ENCODE measurements at regions of chr17 and their contacts with region 1.

Region 1: DNA sequence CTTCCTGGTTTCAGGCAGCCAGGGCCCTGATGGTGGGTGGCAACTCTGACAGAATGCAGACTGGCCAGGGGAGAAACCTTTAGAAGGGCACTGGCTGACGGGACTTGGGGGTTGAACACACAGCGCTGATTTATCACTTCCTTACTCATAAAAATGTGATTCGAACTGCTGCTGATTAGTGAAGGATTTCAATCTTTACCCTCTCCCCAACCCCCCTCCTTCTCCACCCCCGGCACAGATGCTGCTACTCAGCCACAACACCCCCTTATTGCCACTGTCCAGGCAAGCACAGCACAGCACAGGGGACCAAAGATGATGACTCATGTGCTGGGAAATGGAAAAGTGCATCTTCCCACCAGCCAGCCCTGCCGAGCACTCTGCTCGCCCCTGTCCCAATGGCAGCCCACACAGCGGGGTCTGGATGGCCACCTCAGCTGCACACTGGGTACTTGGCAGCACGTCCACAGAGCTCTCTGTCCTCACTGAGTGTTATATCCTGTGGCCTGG is 70.1 kb downstream of the SMG6 start:
- DNase-seq: no peak
- ATAC-seq: no peak
- H3K4me3 Mint-ChIP-seq: no peak overlapping the region
- H3K27ac Mint-ChIP-seq: no peak overlapping the region
- H3K4me1 Mint-ChIP-seq: no peaks in the 10 kb centered on the region
- H3K27me3 Mint-ChIP-seq: no peaks in the 10 kb centered on the region
- CTCF ChIP-seq: no peak

Region 2: GRCh38 chr17:2195729-2196128 is 37.8 kb before region 1 on chr17:
- CTCF ChIA-PET with region 1: no interaction called
- POLR2A ChIA-PET with region 1: no interaction called
- DNase-seq: no peak
- ATAC-seq: no peak
- H3K4me3 Mint-ChIP-seq: no peak overlapping the region
- H3K27ac Mint-ChIP-seq: peak overlapping the region; percentile 11; the same call in 1 of the 2 replicates
- H3K4me1 Mint-ChIP-seq: peaks cover 46% of the 10 kb centered on the region
- H3K27me3 Mint-ChIP-seq: no peaks in the 10 kb centered on the region
- CTCF ChIP-seq: no peak

Region 3: GRCh38 chr17:2215616-2216364 is 17.7 kb before region 1 on chr17:
- CTCF ChIA-PET with region 1: interaction called, 11 read pairs
- POLR2A ChIA-PET with region 1: no interaction called
- DNase-seq: peak; percentile 33
- ATAC-seq: peak; percentile 85
- H3K4me3 Mint-ChIP-seq: peak overlapping the region; percentile 25; the same call in 1 of the 2 replicates
- H3K27ac Mint-ChIP-seq: peak overlapping the region; percentile 51
- H3K4me1 Mint-ChIP-seq: peaks cover 33% of the 10 kb centered on the region
- H3K27me3 Mint-ChIP-seq: no peaks in the 10 kb centered on the region
- CTCF ChIP-seq: no peak

Region 4: DNA sequence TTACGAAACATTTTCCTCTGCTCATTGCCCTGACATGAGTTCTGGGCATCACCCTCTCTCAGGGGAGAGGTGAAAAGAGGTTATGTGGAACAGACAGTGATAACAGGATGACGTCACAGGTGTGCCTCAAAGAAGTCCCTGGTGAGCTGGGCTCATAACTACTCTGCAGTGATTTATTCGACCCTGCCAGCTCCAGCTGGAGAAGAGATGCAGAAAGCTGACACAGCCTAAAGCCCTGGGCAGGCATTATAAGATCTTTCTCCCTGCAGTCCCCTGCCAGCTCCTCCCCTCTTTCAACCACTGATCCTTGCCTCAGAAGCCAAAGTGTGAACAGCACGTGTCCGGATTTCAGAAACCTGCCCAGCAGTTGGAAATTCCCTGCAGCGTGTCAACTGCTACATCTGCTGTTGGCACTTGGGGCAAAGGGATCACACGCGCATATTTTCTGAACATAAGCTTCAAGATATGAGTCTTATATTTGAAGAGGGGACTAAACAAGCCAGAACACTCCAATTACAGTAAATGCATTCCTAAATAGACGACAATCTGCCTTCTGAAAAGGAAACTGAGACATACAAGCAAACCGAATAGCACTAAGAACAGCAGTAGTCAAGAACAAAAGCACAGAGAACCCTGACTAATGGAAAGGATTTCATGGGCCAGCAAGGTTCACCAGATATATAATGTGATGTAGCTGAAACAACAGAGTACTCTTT is 10.4 kb before region 1 on chr17:
- CTCF ChIA-PET with region 1: interaction called, 12 read pairs
- POLR2A ChIA-PET with region 1: no interaction called
- DNase-seq: no peak
- ATAC-seq: no peak
- H3K4me3 Mint-ChIP-seq: no peak overlapping the region
- H3K27ac Mint-ChIP-seq: no peak overlapping the region
- H3K4me1 Mint-ChIP-seq: peaks cover 5% of the 10 kb centered on the region
- H3K27me3 Mint-ChIP-seq: no peaks in the 10 kb centered on the region
- CTCF ChIP-seq: no peak

Region 5: DNA sequence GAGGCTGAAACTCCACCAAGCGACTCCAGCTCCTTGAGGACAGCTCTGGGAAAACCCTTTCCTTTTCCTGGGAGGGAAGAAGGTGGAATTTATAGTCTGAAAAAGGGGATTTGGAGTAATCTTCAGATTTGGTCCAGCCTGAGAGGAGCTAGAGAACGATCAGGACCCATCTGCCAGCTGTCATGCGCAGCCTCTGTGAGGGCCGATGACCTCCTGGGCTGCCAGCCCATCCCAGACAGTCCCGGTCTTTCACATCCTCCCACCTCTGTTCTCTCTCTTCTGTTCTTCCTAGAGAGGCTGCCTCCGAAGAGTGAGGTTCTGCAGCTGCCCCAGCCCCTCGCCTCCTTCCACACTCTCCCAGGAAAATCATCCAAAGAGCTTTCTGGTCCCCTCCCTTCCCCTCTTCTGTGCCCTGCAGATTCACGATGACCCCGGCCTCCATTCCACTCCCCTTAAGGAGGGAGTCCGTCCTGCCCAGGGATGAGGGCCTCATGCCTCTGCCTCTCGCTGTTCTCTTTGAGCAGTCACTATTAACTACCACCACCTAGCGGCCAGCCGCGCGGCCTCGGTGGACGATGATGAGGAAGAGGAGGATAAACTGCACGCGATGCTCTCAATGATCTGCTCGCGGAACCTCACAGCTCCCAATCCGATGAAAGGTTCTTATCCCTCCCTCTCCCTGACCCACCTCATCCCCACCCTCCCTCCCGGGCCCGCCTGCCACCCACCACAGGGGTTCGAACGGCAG is 133.4 kb after region 1 on chr17:
- CTCF ChIA-PET with region 1: no interaction called
- POLR2A ChIA-PET with region 1: no interaction called
- DNase-seq: peak; percentile 72
- ATAC-seq: peak; percentile 56
- H3K4me3 Mint-ChIP-seq: no peak overlapping the region
- H3K27ac Mint-ChIP-seq: peak overlapping the region; percentile 68; the same call in 1 of the 2 replicates
- H3K4me1 Mint-ChIP-seq: peaks cover 12% of the 10 kb centered on the region
- H3K27me3 Mint-ChIP-seq: no peaks in the 10 kb centered on the region
- CTCF ChIP-seq: no peak